HepG2 (cell line): ENCODE measurements at regions of chr17 and their contacts with region 1.

Region 1: GRCh38 chr17:44123356-44124117 is at the start of gene HDAC5:
- DNase-seq: peak; percentile 86
- ATAC-seq: peak; percentile 81
- H3K4me3 ChIP-seq: peak within 1 kb of the TSS; percentile 80 to 97 (median 84)
- H3K27ac ChIP-seq: peak within 1 kb of the TSS; percentile 81
- H3K4me1 ChIP-seq: peaks cover 52% of the 10 kb centered on the region
- H3K27me3 ChIP-seq: peaks cover 2 to 11% of the 10 kb centered on the region in 2 experiments; a peak in 2 of 5 replicates
- CTCF ChIP-seq: peak; percentile 95
- EP300 ChIP-seq: peak; percentile 32 to 51; a peak in 2 of 4 replicates
- POLR2A ChIP-seq: peak; percentile 59 to 87
- RAD21 ChIP-seq: peak; percentile 89
- total RNA-seq, gene HDAC5: 34.0 and 46.4 TPM in 2 replicates

Region 2: DNA sequence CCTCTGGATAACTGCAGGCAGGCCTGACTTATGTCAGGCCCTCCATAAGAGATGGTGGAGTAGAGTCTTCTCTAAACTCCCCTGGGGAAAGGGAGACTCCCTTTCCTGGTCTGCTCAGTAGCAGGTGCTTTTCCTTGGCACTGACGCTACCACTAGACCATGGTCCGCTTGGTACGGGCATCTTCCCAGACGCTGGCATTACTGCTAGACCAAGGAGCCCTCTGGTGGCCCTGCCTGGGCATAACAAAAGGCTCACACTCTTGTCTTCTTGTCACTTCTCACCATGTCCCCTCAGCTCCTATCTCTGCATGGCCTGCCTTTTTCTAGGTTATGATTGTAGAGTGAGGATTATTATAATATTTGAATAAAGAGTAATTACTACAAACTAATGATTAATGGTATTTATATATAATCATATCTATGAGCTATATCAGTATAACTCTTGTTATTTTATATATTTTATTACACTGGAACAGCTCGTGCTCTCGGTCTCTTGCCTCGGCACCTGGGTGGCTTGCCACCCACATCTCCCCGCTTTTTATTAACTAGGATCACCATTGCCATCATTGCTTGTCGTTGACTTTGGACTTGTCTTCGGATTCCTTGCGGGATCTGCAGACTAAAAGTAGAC is 784.5 kb before region 1 on chr17:
- CTCF ChIA-PET with region 1: no interaction called
- POLR2A ChIA-PET with region 1: no interaction called
- in situ Hi-C with region 1: no loop called
- intact Hi-C with region 1: no loop called
- DNase-seq: peak; percentile 51
- ATAC-seq: no peak
- H3K4me3 ChIP-seq: no peak overlapping the region
- H3K27ac ChIP-seq: no peak overlapping the region
- H3K4me1 ChIP-seq: peaks cover 2% of the 10 kb centered on the region
- H3K27me3 ChIP-seq: no peaks in the 10 kb centered on the region
- CTCF ChIP-seq: peak; percentile 80
- EP300 ChIP-seq: no peak
- POLR2A ChIP-seq: no peak
- RAD21 ChIP-seq: peak; percentile 67; the same call in 1 of the 2 replicates

Region 3: GRCh38 chr17:44070455-44071197 is 52.9 kb before region 1 on chr17 and contains the start of gene G6PC3:
- CTCF ChIA-PET with region 1: no interaction called
- POLR2A ChIA-PET with region 1: interaction called, 16 read pairs
- in situ Hi-C with region 1: no loop called
- intact Hi-C with region 1: no loop called
- DNase-seq: peak; percentile 99
- ATAC-seq: peak; percentile 84
- H3K4me3 ChIP-seq: peak within 1 kb of the TSS; percentile 63 to 96 (median 77)
- H3K27ac ChIP-seq: peak within 1 kb of the TSS; percentile 88
- H3K4me1 ChIP-seq: peaks cover 34% of the 10 kb centered on the region
- H3K27me3 ChIP-seq: peaks cover 0 to 3% of the 10 kb centered on the region in 2 experiments; a peak in 1 of 5 replicates
- CTCF ChIP-seq: peak; percentile 41
- EP300 ChIP-seq: peak; percentile 14 to 84; a peak in 3 of 4 replicates
- POLR2A ChIP-seq: peak; percentile 96 to 98
- RAD21 ChIP-seq: peak; percentile 63
- total RNA-seq, gene G6PC3: 18.8 and 38.5 TPM in 2 replicates

Region 4: GRCh38 chr17:44095642-44096496 is 27.7 kb before region 1 on chr17:
- CTCF ChIA-PET with region 1: interaction called, 3 read pairs
- POLR2A ChIA-PET with region 1: interaction called, 19 read pairs
- in situ Hi-C with region 1: no loop called
- intact Hi-C with region 1: no loop called
- DNase-seq: peak; percentile 94
- ATAC-seq: peak; percentile 92
- H3K4me3 ChIP-seq: peak overlapping the region; percentile 28 to 68 (median 31); a peak in 5 of 6 replicates
- H3K27ac ChIP-seq: peak overlapping the region; percentile 94
- H3K4me1 ChIP-seq: peaks cover 47% of the 10 kb centered on the region
- H3K27me3 ChIP-seq: no peaks in the 10 kb centered on the region
- CTCF ChIP-seq: peak; percentile 81
- EP300 ChIP-seq: no peak; a peak in 1 of 4 replicates
- POLR2A ChIP-seq: peak; percentile 74 to 89
- RAD21 ChIP-seq: peak; percentile 85

Region 5: GRCh38 chr17:44141717-44142285 is 18.3 kb after region 1 on chr17 and contains the start of gene HROB:
- CTCF ChIA-PET with region 1: interaction called, 21 read pairs
- POLR2A ChIA-PET with region 1: interaction called, 34 read pairs
- in situ Hi-C with region 1: no loop called
- intact Hi-C with region 1: loop called (anchors 1 kb)
- DNase-seq: peak; percentile 92
- ATAC-seq: peak; percentile 79
- H3K4me3 ChIP-seq: peak within 1 kb of the TSS; percentile 85 to 100 (median 99)
- H3K27ac ChIP-seq: peak within 1 kb of the TSS; percentile 85
- H3K4me1 ChIP-seq: peaks cover 46% of the 10 kb centered on the region
- H3K27me3 ChIP-seq: no peaks in the 10 kb centered on the region
- CTCF ChIP-seq: peak; percentile 93
- EP300 ChIP-seq: peak in 1 of 2 experiments; percentile 65; a peak in 3 of 4 replicates
- POLR2A ChIP-seq: peak; percentile 35 to 43; a peak in 1 of 4 replicates
- RAD21 ChIP-seq: peak; percentile 74; the same call in 1 of the 2 replicates
- total RNA-seq, gene HROB: 6.7 and 7.1 TPM in 2 replicates

Region 6: GRCh38 chr17:44186307-44187130 is 63.0 kb after region 1 on chr17 and contains the start of gene TMUB2:
- CTCF ChIA-PET with region 1: no interaction called
- POLR2A ChIA-PET with region 1: interaction called, 13 read pairs
- in situ Hi-C with region 1: no loop called
- intact Hi-C with region 1: no loop called
- DNase-seq: peak; percentile 99
- ATAC-seq: peak; percentile 81
- H3K4me3 ChIP-seq: peak within 1 kb of the TSS; percentile 95 to 97 (median 96)
- H3K27ac ChIP-seq: peak within 1 kb of the TSS; percentile 91
- H3K4me1 ChIP-seq: peaks cover 55% of the 10 kb centered on the region
- H3K27me3 ChIP-seq: no peaks in the 10 kb centered on the region; a peak in 1 of 5 replicates
- CTCF ChIP-seq: peak; percentile 16; the same call in 1 of the 2 replicates
- EP300 ChIP-seq: peak in 1 of 2 experiments; percentile 34; a peak in 1 of 4 replicates
- POLR2A ChIP-seq: peak; percentile 95 to 97
- RAD21 ChIP-seq: peak; percentile 9; the same call in 1 of the 2 replicates
- total RNA-seq, gene TMUB2: 18.7 and 26.9 TPM in 2 replicates

Region 7: DNA sequence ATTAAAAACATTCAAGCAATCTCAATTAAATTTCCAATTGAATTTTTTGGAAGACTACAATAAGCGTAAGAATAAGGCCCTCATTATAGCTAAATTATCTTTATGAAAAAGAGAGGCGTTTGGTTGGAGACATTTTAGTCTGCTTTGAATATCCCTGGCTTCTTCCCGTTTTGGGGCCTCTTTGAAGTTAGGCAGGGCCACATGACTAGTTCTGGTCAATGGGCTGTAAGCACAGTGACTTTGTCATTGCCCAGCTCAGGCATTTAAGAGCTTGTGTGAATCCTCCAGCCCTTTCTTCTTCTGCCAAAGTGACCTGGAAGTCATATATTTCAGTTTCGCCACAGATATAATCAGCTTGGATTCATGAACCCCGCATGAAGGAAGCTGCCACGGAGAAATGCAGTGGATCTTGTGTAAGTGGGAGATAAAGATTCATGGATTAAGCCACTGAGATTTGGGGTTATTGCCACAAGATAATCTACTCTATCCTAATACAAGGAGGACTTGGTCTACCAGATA is 117.6 kb after region 1 on chr17:
- CTCF ChIA-PET with region 1: no interaction called
- POLR2A ChIA-PET with region 1: no interaction called
- in situ Hi-C with region 1: no loop called
- intact Hi-C with region 1: no loop called
- DNase-seq: no peak
- ATAC-seq: no peak
- H3K4me3 ChIP-seq: no peak overlapping the region
- H3K27ac ChIP-seq: no peak overlapping the region
- H3K4me1 ChIP-seq: peaks cover 5% of the 10 kb centered on the region
- H3K27me3 ChIP-seq: peaks cover 0 to 24% of the 10 kb centered on the region in 2 experiments; a peak in 3 of 5 replicates
- CTCF ChIP-seq: no peak
- EP300 ChIP-seq: no peak
- POLR2A ChIP-seq: no peak
- RAD21 ChIP-seq: no peak